ENCODE measurements at regions of chr21 and their contacts with region 1.

Region 1: GRCh38 chr21:16194095-16194787 is 464.5 kb downstream of the USP25 start:
- DNase-seq: peak; percentile 59
- H3K4me3 ChIP-seq: peak overlapping the region; percentile 24 to 36
- H3K27ac ChIP-seq: peak overlapping the region; percentile 69 to 78
- H3K4me1 ChIP-seq: no peaks in the 10 kb centered on the region
- H3K27me3 ChIP-seq: no peaks in the 10 kb centered on the region
- CTCF ChIP-seq: no peak
- POLR2A ChIP-seq: no peak

Region 2: GRCh38 chr21:16082038-16082816 is 112.0 kb before region 1 on chr21:
- intact Hi-C with region 1: loop called (anchors 5 kb)
- DNase-seq: no peak
- H3K4me3 ChIP-seq: no peak overlapping the region
- H3K27ac ChIP-seq: peak overlapping the region; percentile 46 to 56
- H3K4me1 ChIP-seq: no peaks in the 10 kb centered on the region
- H3K27me3 ChIP-seq: no peaks in the 10 kb centered on the region
- CTCF ChIP-seq: peak in 3 of 4 experiments; percentile 41 to 70 (median 47)
- POLR2A ChIP-seq: no peak

Measured in prostate gland (tissue), 2 donors.